Mammary epithelial cell (primary cell): ENCODE measurements at regions of chr12 and their contacts with region 1.

Region 1: GRCh38 chr12:19757317-19757877 is 318.1 kb downstream of the AEBP2 start:
- DNase-seq: peak; percentile 19
- H3K4me3 ChIP-seq: no peak overlapping the region
- H3K27ac ChIP-seq: no peak overlapping the region
- H3K4me1 ChIP-seq: peaks cover 9% of the 10 kb centered on the region
- H3K27me3 ChIP-seq: no peaks in the 10 kb centered on the region
- CTCF ChIP-seq: peak; percentile 55 to 77

Region 2: DNA sequence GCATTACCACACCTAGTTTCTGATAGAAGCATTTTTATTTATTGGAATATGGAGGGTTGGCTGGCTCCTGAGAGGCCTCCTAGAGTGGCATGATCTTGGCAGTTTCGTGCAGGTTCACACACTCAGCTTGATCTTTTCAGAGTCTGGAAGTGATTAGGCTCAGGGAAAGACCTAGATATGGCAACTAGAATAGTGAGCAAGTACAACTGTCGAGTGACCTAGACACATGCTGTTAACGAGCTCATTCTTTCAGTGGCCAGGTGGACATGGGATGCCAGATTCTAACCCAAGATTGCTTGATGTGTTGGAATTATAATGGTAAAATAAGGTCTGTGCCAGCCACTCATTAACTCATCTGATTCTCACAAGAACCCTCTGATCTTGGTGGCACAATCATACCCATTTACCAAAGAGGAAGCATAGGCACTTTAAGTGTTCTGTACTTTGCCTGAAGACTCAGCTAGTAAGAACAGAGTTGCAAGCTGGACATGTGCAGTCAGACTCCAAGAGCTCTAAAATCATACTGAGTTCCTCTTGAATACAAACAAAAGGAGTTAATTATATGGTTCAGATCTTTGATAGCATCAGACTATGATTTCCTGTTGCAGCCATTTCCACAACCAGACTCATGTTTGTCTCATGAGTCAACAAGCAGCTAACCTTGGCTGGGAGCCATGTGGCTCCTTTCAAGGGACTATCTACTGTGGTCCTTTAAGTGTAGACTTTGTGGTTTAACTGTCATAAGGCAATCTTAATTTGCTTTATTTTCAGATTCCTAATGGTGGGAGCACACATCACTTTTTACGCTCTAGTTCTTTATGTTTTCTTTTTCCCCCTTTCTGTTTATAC is 483.7 kb before region 1 on chr12:
- CTCF ChIA-PET with region 1: no interaction called
- dilution Hi-C with region 1: no loop called
- in situ Hi-C with region 1: no loop called
- intact Hi-C with region 1: no loop called
- DNase-seq: peak; percentile 91
- H3K4me3 ChIP-seq: no peak overlapping the region
- H3K27ac ChIP-seq: peak overlapping the region; percentile 35
- H3K4me1 ChIP-seq: peaks cover 23% of the 10 kb centered on the region
- H3K27me3 ChIP-seq: no peaks in the 10 kb centered on the region
- CTCF ChIP-seq: no peak

Region 3: GRCh38 chr12:19893514-19893913 is 136.1 kb after region 1 on chr12:
- CTCF ChIA-PET with region 1: interaction called, 3 read pairs
- dilution Hi-C with region 1: no loop called
- in situ Hi-C with region 1: no loop called
- intact Hi-C with region 1: loop called (anchors 1 kb)
- DNase-seq: peak; percentile 6
- H3K4me3 ChIP-seq: no peak overlapping the region
- H3K27ac ChIP-seq: no peak overlapping the region
- H3K4me1 ChIP-seq: no peaks in the 10 kb centered on the region
- H3K27me3 ChIP-seq: no peaks in the 10 kb centered on the region
- CTCF ChIP-seq: peak in 1 of 2 donors; percentile 53